Left cardiac atrium (tissue), 4 donors: ENCODE measurements at regions of chr9 and their contacts with region 1.

Region 1: DNA sequence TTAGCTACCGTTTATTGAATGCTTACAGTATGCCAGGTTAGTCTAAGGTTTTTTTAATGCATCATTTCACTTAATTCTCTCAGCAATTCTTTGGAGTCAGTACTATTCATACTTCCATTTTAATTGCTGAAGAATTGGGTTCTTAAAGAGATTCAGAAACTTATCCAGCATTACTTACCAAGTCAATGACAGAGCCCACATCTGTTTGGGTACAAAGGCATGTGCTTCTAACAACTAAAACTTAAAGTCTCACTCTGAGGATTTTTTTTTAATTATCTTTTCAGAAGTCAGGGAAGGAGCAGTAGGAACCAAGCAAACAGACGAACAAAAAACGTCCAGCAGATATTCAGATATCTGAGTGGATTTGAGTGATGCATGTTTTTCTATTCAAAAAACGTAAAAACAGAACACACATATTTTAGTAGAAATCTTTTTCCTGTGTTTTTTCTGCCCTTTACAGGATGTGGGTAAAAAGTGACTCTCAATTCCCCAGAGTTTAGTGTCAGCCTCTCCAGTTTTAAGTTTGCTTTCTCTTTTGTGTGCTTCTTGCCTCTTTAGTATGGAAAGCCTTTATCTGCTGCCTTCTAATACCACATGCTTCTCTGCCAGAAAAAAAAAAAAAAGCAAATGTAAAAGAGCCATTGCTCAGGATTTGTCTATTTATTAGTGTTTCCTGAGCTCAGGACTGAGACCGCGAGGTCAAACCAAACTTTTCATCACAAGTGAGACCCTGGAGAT is 118.0 kb downstream of the PRKACG start:
- DNase-seq: no peak
- ATAC-seq: peak; percentile 53 to 78

Region 2: DNA sequence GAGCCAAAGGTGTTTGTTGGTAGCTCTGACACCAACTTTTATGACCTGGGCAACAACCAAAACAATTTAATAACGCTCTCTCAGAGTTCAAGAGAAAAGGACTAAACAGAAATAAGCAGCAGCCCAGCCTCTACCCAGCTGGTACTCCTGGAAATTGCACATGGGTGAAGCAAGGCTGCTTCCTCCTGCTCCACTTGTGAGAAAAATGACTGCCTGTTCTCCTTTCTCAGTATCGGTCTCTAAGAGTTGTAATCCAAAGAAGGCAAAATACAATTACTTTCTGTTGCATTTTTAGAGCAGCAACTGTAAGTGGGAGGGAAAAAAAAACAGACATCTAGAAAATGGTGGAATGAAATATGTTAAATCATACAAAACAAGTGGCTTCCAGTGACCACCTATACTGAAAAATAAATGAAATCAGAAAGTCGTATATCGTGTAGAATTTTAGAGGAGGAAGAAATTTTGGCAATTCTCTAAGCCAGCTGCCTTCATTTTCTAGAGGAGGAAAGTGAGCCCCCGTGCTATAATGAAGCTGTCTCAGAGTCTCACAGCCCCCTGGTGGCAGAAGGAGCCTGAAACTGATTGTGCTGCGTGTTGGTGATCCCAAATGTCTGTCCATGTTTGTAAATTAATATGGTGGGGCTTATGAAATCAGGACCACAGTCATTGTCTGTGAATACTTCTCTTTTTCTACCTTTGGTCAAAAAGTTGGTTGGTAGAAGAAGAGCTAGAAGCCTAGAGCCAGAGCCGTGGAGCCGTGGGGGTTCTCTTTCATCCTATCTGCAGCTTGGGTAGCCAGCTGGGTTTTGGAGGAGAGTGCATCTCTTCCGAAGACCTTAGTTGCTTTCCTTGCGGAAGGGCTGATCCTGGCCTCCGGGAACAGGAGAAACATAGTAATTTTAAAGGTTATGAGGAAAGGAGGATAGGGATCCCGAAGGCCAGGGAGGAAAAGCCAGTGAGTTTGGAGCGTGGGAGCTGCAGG is 51.0 kb before region 1 on chr9:
- intact Hi-C with region 1: loop called in 1 of 2 experiments (anchors 10 kb)
- DNase-seq: peak; percentile 60
- ATAC-seq: peak; percentile 70